Esophagus muscularis mucosa (tissue), 4 donors: ENCODE measurements at regions of chr1 and their contacts with region 1.

Region 1: GRCh38 chr1:91885716-91886506 is at the start of gene TGFBR3:
- DNase-seq: peak; percentile 98
- H3K4me3 ChIP-seq: peak within 1 kb of the TSS; percentile 72 to 88 (median 83)
- H3K27ac ChIP-seq: peak within 1 kb of the TSS; percentile 92 to 99 (median 98)
- H3K4me1 ChIP-seq: peaks cover 13 to 56% (median 52%) of the 10 kb centered on the region in 4 donors
- H3K27me3 ChIP-seq: no peaks in the 10 kb centered on the region
- CTCF ChIP-seq: peak; percentile 44 to 68 (median 47)
- EP300 ChIP-seq: no peak
- POLR2A ChIP-seq: peak; percentile 46
- total RNA-seq, gene TGFBR3: 176 to 262 (median 188) TPM

Region 2: DNA sequence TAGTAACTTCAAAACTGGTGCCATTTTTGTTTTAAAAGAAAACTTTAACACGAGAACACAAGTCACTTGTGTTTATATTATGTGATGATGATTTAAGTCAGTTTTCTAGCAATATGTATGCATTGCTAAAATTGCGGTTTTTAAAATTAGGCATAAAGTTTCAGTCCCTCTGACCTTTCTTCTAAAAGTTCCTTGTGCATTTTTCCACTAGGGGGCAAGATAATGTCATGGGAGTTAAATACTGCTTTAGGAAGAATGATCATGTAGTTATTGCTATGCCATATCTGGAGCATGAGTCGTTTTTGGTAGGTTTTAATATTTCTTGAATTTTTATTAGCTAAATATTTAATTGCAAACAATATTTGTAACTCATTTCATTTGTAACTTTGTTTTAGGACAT is 374.5 kb before region 1 on chr1:
- intact Hi-C with region 1: no loop called
- DNase-seq: no peak
- H3K4me3 ChIP-seq: no peak overlapping the region
- H3K27ac ChIP-seq: no peak overlapping the region
- H3K4me1 ChIP-seq: peaks cover 0 to 26% (median 22%) of the 10 kb centered on the region in 4 donors
- H3K27me3 ChIP-seq: no peaks in the 10 kb centered on the region
- CTCF ChIP-seq: peak; percentile 70 to 76 (median 71)
- EP300 ChIP-seq: no peak
- POLR2A ChIP-seq: no peak

Region 3: DNA sequence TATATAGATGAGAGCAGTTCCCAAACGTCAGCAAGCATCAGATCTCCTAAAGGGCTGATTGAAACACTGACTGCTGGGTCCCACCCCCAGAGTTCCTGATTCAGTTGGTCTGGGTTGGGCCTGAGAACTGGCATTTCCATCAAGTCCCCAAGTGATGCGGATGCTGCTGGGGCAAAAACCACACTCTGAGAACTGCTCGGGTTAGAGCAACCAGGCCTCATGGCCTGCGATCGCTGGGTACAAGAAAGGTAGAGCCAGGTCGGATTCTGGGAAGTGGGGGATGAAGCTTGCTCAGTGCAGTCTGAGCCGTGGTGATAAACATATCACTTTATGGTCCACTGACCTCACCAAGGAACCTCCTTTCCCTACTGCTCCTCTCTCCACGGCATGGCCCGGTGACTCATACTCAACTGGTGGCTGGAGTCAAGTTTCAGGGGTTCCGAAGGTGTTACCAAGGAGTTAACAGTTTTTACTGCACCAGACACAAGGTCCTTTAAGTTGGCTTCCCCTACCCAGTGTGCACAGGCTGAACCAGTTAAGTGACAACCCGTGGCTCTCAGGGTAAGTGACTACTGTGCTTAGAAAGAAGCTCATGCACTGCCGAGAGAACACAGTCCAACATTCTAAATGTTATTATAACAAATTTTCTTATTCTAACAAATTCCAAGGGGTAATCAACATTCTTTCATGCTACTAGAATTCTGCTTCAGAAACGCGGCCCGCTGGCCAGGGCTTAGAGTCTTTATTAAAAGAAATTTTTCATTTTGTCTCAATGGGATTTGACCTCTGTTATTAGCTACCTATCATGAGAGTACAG is 153.4 kb before region 1 on chr1:
- intact Hi-C with region 1: loop called (anchors 5 kb)
- DNase-seq: no peak
- H3K4me3 ChIP-seq: no peak overlapping the region
- H3K27ac ChIP-seq: peak overlapping the region; percentile 86 to 90 (median 87)
- H3K4me1 ChIP-seq: peaks cover 66 to 97% (median 88%) of the 10 kb centered on the region in 4 donors
- H3K27me3 ChIP-seq: no peaks in the 10 kb centered on the region
- CTCF ChIP-seq: no peak
- EP300 ChIP-seq: no peak
- POLR2A ChIP-seq: no peak

Region 4: DNA sequence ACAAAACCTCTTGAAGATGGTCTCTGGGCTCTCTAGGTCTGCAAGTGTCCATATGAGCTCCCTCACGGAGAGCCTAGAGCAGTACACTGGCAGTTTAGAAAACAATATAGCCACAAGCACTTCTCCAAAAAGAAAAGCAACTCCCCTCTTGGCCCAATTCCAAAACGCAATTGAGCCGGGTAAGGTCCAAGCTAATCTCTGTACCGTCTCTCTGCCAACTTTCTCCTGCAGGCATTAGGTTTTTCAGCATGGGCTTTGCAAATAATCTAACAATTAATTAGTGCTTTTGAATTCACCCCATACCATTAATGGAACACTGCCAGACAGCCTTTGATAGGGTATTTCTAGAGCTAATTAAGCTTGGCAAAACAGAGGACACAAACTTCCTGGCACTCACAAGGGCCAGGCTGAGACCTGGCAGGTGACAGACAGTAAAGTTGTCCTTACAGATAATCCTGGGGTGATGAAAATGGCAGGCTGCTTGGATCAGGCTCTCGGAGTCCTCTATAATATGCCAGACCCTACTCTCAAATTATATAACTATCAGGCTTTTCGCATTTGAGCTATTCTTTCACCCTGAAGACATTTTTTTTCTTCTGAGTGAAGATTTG is 39.8 kb before region 1 on chr1:
- intact Hi-C with region 1: loop called (anchors 5 kb)
- DNase-seq: no peak
- H3K4me3 ChIP-seq: peak overlapping the region in 1 of 4 donors; percentile 5
- H3K27ac ChIP-seq: peak overlapping the region; percentile 77 to 85 (median 83)
- H3K4me1 ChIP-seq: peaks cover 43 to 94% (median 86%) of the 10 kb centered on the region in 4 donors
- H3K27me3 ChIP-seq: no peaks in the 10 kb centered on the region
- CTCF ChIP-seq: no peak
- EP300 ChIP-seq: no peak
- POLR2A ChIP-seq: no peak